Cardiac septum (tissue), 1 donor: ENCODE measurements at regions of chr10 and their contacts with region 1.

Region 1: DNA sequence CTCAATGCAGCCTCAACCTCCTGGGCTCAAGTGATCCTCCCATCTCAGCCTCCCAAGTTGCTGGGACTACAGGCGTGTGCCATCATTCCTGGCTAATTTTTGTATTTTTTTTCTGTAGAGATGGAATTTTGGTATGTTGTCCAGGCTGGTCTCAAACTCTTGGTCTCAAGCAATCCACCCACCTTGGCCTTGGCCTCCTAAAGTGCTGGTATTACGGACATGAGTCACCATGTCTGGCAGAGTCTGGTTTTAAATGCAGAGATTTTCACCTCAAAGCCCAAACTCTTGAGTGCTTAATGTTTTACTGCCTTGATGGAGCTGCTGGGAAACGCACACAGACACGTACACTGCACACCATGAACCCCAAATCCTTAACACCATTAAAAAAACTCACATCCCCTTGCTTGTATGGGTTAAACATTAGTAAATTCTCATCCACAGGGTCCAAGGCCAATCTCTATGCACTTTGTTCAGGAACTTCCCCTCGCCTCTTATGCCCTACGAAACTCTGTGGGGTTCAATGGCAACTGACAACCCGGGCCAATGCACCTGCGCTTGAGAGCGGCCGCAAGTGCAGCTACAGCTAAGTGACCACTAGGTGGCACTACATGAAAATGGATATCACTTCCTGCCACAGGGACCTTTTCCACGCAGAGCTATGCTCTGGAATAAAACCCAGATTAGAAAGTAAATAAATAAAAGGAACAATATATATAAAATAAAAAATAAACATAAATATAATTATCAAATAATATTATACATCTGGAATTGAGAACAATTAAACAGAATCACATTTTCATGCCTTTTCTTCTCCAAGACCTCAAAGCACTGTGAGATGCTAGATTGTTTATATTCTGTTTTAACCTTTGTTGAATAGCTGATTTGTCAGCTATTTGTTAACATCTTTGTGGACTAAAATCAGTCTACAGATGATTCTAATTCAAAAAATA is 66.9 kb upstream of the AFAP1L2 start:
- DNase-seq: no peak

Region 2: GRCh38 chr10:114526504-114527238 is 55.4 kb after region 1 on chr10:
- intact Hi-C with region 1: loop called (anchors 5 kb)
- DNase-seq: no peak

Region 3: GRCh38 chr10:114623661-114624294 is 152.5 kb after region 1 on chr10:
- intact Hi-C with region 1: loop called (anchors 10 kb)
- DNase-seq: no peak

Region 4: DNA sequence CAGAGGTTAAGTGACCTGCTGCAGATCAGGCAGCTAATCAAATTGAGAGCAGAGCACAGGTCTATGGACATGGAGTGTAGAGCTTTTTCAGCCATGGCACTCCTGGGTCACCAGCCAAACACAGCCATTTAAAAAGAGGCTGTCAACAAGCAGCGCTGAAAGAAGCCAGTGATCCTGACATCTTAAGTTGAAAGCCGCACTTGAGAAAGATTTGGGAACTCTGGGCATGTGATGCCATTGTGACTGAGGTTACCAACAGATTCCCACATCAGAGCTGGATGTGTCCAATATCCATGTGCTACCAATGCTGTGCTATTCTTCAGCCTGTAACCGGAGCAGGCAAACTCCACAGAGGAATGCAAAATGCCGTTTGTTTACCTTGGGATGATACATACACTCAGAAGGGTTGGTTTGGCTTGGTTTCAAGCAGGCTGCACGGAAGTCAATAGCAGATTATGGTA is 243.1 kb after region 1 on chr10:
- intact Hi-C with region 1: loop called (anchors 5 kb)
- DNase-seq: no peak

Region 5: DNA sequence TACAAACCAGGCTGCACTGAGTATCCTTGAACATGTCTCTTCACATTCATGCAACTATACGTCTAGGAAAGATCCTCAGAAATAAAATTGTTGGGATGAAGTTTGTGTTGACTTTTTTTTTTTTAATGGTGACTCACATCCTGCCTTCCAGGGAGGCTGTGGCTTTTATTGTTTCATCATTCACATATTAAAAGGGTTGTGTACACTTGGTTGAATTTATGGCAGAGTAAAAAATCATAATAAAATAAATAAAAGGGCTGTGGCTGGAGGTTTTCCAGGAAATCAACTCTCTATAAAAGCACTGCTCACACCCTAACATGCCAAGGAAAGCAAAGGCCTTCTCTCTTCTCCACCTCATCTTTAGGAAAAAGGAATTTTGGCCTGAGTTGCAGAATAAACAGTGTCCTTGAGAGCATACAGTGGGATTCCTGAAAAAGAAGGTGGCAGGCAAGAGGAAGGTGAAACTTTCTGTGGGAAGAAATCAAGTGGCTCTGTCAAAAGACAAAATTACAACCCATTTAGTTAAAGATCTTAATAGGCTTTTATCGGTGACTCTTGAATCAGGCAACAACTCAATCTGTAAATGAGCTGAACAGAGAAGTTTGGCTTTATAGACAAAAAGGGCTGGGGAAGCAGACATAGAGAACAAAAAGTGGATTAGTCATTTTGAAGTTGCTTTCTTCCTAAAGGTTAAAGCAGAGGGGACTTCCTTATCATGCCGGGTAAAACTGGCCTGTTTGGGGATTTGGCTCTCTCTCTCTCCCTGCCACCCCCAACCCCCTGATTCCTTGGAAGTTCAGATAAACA is 308.8 kb after region 1 on chr10:
- intact Hi-C with region 1: loop called (anchors 5 kb)
- DNase-seq: no peak